PC-3 (cell line): ENCODE measurements at regions of chr10 and their contacts with region 1.

Region 1: GRCh38 chr10:34677591-34677990 is 137.5 kb downstream of the PARD3 start:
- DNase-seq: no peak
- ATAC-seq: no peak
- H3K4me3 ChIP-seq: no peak overlapping the region
- H3K27ac ChIP-seq: no peak overlapping the region
- H3K4me1 ChIP-seq: no peaks in the 10 kb centered on the region
- H3K27me3 ChIP-seq: no peaks in the 10 kb centered on the region
- CTCF ChIP-seq: peak; percentile 49

Region 2: GRCh38 chr10:34768261-34768971 is 90.8 kb after region 1 on chr10:
- CTCF ChIA-PET with region 1: no interaction called
- POLR2A ChIA-PET with region 1: no interaction called
- intact Hi-C with region 1: no loop called
- DNase-seq: peak; percentile 99
- ATAC-seq: peak; percentile 100
- H3K4me3 ChIP-seq: peak overlapping the region; percentile 41
- H3K27ac ChIP-seq: peak overlapping the region; percentile 67
- H3K4me1 ChIP-seq: peaks cover 18% of the 10 kb centered on the region
- H3K27me3 ChIP-seq: no peaks in the 10 kb centered on the region
- CTCF ChIP-seq: no peak

Region 3: DNA sequence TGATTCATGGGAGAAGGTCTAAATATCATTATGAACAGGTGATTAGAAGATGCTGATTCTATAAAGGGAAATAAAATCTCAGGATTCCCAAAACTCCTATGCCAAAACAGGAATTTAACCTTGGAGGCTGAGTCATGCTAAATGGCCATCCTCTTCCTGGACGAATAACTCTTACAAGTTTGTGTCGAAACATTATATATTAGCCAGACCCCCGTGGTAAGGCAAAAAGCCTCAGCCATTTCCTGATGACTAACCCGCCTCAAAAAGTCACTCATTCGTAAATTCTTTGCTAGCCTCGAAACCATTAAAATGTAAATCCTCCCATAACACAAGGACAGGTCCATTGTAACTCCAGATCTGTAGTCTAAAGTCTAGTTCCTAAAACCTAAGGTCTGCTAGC is 380.5 kb after region 1 on chr10:
- CTCF ChIA-PET with region 1: interaction called, 10 read pairs
- POLR2A ChIA-PET with region 1: no interaction called
- intact Hi-C with region 1: no loop called
- DNase-seq: peak; percentile 100
- ATAC-seq: peak; percentile 94
- H3K4me3 ChIP-seq: peak overlapping the region; percentile 16
- H3K27ac ChIP-seq: peak overlapping the region; percentile 77
- H3K4me1 ChIP-seq: peaks cover 43% of the 10 kb centered on the region
- H3K27me3 ChIP-seq: no peaks in the 10 kb centered on the region
- CTCF ChIP-seq: no peak